PC-3 (cell line): ENCODE measurements at regions of chr15 and their contacts with region 1.

Region 1: GRCh38 chr15:48358229-48358641 is 27.0 kb downstream of the DUT start:
- DNase-seq: peak; percentile 49
- ATAC-seq: peak; percentile 73
- H3K4me3 ChIP-seq: peak overlapping the region; percentile 32; the same call in 1 of the 2 replicates
- H3K27ac ChIP-seq: peak overlapping the region; percentile 68
- H3K4me1 ChIP-seq: peaks cover 13% of the 10 kb centered on the region
- H3K27me3 ChIP-seq: no peaks in the 10 kb centered on the region
- CTCF ChIP-seq: peak; percentile 78

Region 2: GRCh38 chr15:48330855-48331795 is 27.1 kb before region 1 on chr15 and contains the start of gene DUT:
- CTCF ChIA-PET with region 1: no interaction called
- POLR2A ChIA-PET with region 1: no interaction called
- intact Hi-C with region 1: no loop called
- DNase-seq: peak; percentile 72
- ATAC-seq: peak; percentile 93
- H3K4me3 ChIP-seq: peak within 1 kb of the TSS; percentile 83
- H3K27ac ChIP-seq: peak within 1 kb of the TSS; percentile 96
- H3K4me1 ChIP-seq: peaks cover 14% of the 10 kb centered on the region
- H3K27me3 ChIP-seq: no peaks in the 10 kb centered on the region
- CTCF ChIP-seq: no peak
- total RNA-seq, gene DUT: 76.9 and 85.2 TPM in 2 replicates

Region 3: DNA sequence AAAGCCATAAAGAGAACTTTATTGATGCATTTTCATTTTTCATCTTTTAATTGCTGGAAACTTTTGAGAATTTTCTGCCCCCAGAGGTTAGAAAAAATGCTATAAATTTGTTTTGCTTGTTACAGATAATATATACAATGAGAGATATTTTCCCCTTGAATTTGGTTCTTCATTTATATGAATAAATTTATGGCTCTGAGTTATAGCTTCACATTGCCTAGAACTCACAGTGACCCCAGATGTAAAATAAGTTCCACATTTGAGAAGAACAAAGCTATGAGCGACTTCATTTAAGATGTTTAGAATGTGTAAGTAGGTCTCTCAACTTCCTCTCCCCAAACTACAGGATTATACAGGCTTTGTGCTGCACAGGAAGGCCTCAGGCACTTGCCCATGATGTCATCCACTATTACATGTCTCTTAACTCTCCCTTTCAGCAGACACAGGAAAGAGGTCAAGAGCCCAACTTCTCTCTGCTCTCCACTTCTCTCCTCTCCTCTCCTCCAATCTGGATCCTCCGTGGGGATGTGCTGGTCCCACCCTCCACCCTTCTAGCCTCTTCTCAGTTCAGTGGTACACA is 65.8 kb after region 1 on chr15:
- CTCF ChIA-PET with region 1: no interaction called
- POLR2A ChIA-PET with region 1: no interaction called
- intact Hi-C with region 1: no loop called
- DNase-seq: peak; percentile 60
- ATAC-seq: peak; percentile 84
- H3K4me3 ChIP-seq: no peak overlapping the region
- H3K27ac ChIP-seq: peak overlapping the region; percentile 43
- H3K4me1 ChIP-seq: peaks cover 20% of the 10 kb centered on the region
- H3K27me3 ChIP-seq: no peaks in the 10 kb centered on the region
- CTCF ChIP-seq: no peak

Region 4: DNA sequence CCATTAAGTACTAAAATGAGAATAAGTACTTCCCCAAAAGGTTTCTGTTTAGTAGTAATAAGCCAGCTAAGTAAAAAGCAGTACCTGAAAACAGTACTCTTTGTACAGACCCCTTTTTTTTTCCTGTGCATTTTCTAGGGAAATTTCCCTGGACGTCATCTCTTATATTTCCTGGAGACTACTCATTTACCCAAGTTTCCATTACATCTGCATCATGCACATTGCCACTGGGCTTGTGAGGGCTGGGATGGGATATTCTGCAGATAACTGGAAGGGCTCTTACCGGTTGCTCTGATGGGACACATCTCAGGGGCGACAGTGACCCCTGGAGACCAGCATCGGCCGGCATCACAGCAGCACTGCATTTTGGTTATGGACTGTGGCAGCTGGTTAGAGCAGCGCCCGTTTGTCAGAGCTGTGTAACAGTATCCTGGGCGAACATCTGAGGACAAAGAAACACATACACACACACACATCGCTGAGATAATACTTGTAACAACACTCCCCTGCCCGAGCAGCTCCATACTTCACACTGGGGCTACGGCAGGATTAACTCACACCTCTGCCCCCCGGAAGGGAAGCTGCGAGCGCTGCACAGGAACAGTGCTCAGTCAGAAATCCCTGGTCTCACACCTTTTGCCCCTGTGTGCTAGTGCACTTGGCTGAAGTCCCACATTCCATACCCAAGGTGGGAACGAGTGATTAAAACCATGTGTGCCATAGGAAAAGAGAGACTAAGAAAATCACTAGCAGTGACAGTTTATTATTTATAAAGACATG is 162.3 kb after region 1 on chr15:
- CTCF ChIA-PET with region 1: interaction called, 4 read pairs
- POLR2A ChIA-PET with region 1: no interaction called
- intact Hi-C with region 1: loop called (anchors 1 kb)
- DNase-seq: peak; percentile 22
- ATAC-seq: no peak; the same call in 1 of the 2 replicates
- H3K4me3 ChIP-seq: no peak overlapping the region
- H3K27ac ChIP-seq: no peak overlapping the region
- H3K4me1 ChIP-seq: no peaks in the 10 kb centered on the region
- H3K27me3 ChIP-seq: no peaks in the 10 kb centered on the region
- CTCF ChIP-seq: peak; percentile 50